ENCODE measurements at regions of chr7 and their contacts with region 1.

Region 1: DNA sequence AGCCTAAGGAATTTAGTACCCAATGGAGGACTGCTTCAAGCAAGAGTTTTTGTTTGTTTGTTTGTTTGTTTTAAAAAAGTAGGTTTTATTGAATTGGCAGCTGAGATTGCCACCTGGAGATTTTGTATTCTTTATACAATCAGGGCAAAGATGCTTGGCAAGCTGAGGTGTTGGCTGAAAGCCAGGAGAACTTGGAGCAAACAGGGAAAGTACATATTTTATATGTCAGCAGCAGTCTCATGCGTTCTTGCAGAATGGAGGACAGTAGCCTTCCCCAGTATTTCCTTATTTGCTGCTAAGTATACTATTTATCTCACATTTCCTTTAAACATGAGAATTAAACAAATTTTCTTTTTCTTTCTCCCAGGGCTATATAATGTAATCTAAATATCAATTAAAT is 22.6 kb upstream of the ICA1 start:
- DNase-seq: no peak
- ATAC-seq: peak in 1 of 8 donors; percentile 28
- H3K4me3 ChIP-seq: no peak overlapping the region
- H3K27ac ChIP-seq: peak overlapping the region; percentile 44 to 90 (median 79)
- H3K4me1 ChIP-seq: peaks cover 0 to 45% (median 6%) of the 10 kb centered on the region in 9 donors
- H3K27me3 ChIP-seq: no peaks in the 10 kb centered on the region
- CTCF ChIP-seq: no peak

Region 2: DNA sequence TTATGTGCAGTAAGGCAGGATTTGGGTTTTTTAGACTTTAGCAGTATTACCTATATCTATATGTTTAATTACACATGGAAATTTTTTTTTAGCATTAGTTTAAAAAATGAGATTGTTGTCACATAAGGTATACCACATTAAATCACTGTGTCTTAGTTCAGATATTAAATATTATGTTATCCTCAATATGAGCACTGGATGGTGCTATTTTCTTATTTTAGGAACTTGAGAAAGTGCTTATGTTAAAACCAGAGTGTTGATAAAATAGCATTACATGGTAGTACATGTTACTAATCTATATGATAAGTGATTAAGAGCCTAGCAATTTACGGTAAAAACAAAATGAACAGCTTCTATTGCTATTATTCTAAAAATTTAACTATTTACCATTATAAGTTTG is 689.2 kb before region 1 on chr7:
- intact Hi-C with region 1: loop called in 1 of 10 experiments (anchors 10 kb)
- DNase-seq: no peak
- ATAC-seq: peak in 1 of 8 donors; percentile 41
- H3K4me3 ChIP-seq: no peak overlapping the region
- H3K27ac ChIP-seq: no peak overlapping the region
- H3K4me1 ChIP-seq: no peaks in the 10 kb centered on the region
- H3K27me3 ChIP-seq: no peaks in the 10 kb centered on the region
- CTCF ChIP-seq: peak in 7 of 9 donors; percentile 38 to 60 (median 48)

Region 3: GRCh38 chr7:7761340-7761980 is 523.1 kb before region 1 on chr7:
- intact Hi-C with region 1: loop called in 1 of 10 experiments (anchors 10 kb)
- DNase-seq: no peak
- ATAC-seq: peak in 7 of 8 donors; percentile 37 to 74 (median 68)
- H3K4me3 ChIP-seq: peak overlapping the region in 9 of 10 donors; percentile 23 to 61 (median 51)
- H3K27ac ChIP-seq: peak overlapping the region; percentile 21 to 86 (median 72)
- H3K4me1 ChIP-seq: peaks cover 0 to 28% (median 11%) of the 10 kb centered on the region in 9 donors
- H3K27me3 ChIP-seq: no peaks in the 10 kb centered on the region
- CTCF ChIP-seq: peak; percentile 21 to 74 (median 57)

Region 4: DNA sequence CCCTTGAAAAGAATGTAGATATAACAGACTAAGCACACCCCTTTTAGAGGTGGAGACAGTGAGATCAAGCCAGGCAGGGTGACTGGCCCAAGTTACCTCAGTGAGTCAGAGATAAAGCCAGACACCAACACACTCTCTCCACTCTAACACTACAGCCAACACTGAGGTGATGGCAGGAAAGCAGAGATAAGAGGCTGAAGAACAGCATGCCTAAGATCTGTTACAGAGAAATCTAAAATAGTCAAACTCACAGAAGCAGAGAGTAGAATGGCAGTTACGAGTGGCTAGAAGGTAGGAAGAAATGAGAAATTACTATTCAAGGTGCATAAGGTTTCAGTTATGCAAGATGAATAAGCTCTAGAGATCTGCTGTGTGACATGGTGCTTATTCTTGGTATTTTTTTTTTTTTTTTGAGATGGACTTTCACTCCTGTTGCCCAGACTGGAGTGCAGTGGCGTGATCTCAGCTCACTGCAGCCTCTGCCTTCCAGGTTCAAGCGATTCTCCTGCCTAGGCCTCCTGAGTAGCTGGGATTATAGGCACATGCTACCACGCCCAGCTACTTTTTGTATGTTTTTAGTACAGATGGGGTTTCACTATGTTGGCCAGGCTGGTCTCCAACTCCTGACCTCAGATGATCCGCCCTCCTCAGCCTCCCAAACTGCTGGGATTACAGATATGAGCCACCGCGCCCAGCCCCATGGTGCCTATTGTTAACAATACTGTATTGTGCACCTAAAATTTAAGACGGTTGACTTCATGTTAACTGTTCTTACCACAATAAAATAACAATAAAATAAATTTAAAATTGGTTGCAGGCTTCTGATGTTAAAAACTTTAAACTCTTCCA is 51.4 kb before region 1 on chr7:
- intact Hi-C with region 1: loop called in 3 of 10 experiments (anchors 2 to 5 kb)
- DNase-seq: peak in 1 of 2 donors; percentile 23
- ATAC-seq: peak; percentile 63 to 96 (median 91)
- H3K4me3 ChIP-seq: no peak overlapping the region
- H3K27ac ChIP-seq: peak overlapping the region in 6 of 10 donors; percentile 6 to 65 (median 46)
- H3K4me1 ChIP-seq: peaks cover 0 to 35% (median 7%) of the 10 kb centered on the region in 9 donors
- H3K27me3 ChIP-seq: no peaks in the 10 kb centered on the region
- CTCF ChIP-seq: no peak

Measured in heart right ventricle (tissue), 16 donors.